Adrenal gland (tissue), 19 donors: ENCODE measurements at regions of chrX and their contacts with region 1.

Region 1: GRCh38 chrX:150508451-150509367 is 59.7 kb upstream of the MTM1 start:
- DNase-seq: peak; percentile 75 to 88 (median 85)
- H3K4me3 ChIP-seq: peak overlapping the region in 1 of 4 donors; percentile 28
- H3K27ac ChIP-seq: peak overlapping the region; percentile 69 to 92 (median 79)
- H3K4me1 ChIP-seq: peaks cover 7 to 14% of the 10 kb centered on the region in 2 donors
- H3K27me3 ChIP-seq: no peaks in the 10 kb centered on the region
- CTCF ChIP-seq: no peak
- POLR2A ChIP-seq: peak in 1 of 2 donors; percentile 57

Region 2: GRCh38 chrX:150184487-150184886 is 324.2 kb before region 1 on chrX:
- intact Hi-C with region 1: no loop called
- DNase-seq: no peak
- H3K4me3 ChIP-seq: no peak overlapping the region
- H3K27ac ChIP-seq: no peak overlapping the region
- H3K4me1 ChIP-seq: no peaks in the 10 kb centered on the region
- H3K27me3 ChIP-seq: no peaks in the 10 kb centered on the region
- CTCF ChIP-seq: no peak
- POLR2A ChIP-seq: no peak

Region 3: GRCh38 chrX:150544222-150544787 is 35.6 kb after region 1 on chrX:
- intact Hi-C with region 1: no loop called
- DNase-seq: peak in 1 of 7 donors; percentile 5
- H3K4me3 ChIP-seq: no peak overlapping the region
- H3K27ac ChIP-seq: no peak overlapping the region
- H3K4me1 ChIP-seq: peaks cover 0 to 16% of the 10 kb centered on the region in 2 donors
- H3K27me3 ChIP-seq: no peaks in the 10 kb centered on the region
- CTCF ChIP-seq: no peak
- POLR2A ChIP-seq: no peak

Region 4: GRCh38 chrX:150683536-150684146 is 174.9 kb after region 1 on chrX:
- intact Hi-C with region 1: no loop called
- DNase-seq: no peak
- H3K4me3 ChIP-seq: no peak overlapping the region
- H3K27ac ChIP-seq: no peak overlapping the region
- H3K4me1 ChIP-seq: no peaks in the 10 kb centered on the region
- H3K27me3 ChIP-seq: no peaks in the 10 kb centered on the region
- CTCF ChIP-seq: peak; percentile 16 to 54 (median 42)
- POLR2A ChIP-seq: no peak

Region 5: GRCh38 chrX:150715184-150715583 is 206.5 kb after region 1 on chrX:
- intact Hi-C with region 1: loop called in 1 of 2 experiments (anchors 5 kb)
- DNase-seq: peak in 1 of 7 donors; percentile 16
- H3K4me3 ChIP-seq: no peak overlapping the region
- H3K27ac ChIP-seq: no peak overlapping the region
- H3K4me1 ChIP-seq: peaks cover 3 to 8% of the 10 kb centered on the region in 2 donors
- H3K27me3 ChIP-seq: no peaks in the 10 kb centered on the region
- CTCF ChIP-seq: no peak
- POLR2A ChIP-seq: no peak

Region 6: GRCh38 chrX:150926304-150926703 is 417.6 kb after region 1 on chrX:
- intact Hi-C with region 1: no loop called
- DNase-seq: no peak
- H3K4me3 ChIP-seq: no peak overlapping the region
- H3K27ac ChIP-seq: no peak overlapping the region
- H3K4me1 ChIP-seq: no peaks in the 10 kb centered on the region
- H3K27me3 ChIP-seq: no peaks in the 10 kb centered on the region
- CTCF ChIP-seq: no peak
- POLR2A ChIP-seq: no peak